CD8-positive, alpha-beta memory T cell (primary cell): ENCODE measurements at regions of chr2 and their contacts with region 1.

Region 1: GRCh38 chr2:170815746-170816503 is 762 bp upstream of the GAD1 start:
- DNase-seq: peak; percentile 32 to 68 (median 50)
- H3K4me3 ChIP-seq: peak overlapping the region; percentile 58
- H3K4me3 Mint-ChIP-seq: peak overlapping the region; percentile 66 to 88 (median 76)
- H3K27ac ChIP-seq: no peak overlapping the region
- H3K27ac Mint-ChIP-seq: peak overlapping the region in 4 of 8 donors; percentile 27 to 91 (median 70)
- H3K4me1 ChIP-seq: peaks cover 53% of the 10 kb centered on the region
- H3K4me1 Mint-ChIP-seq: peaks cover 42 to 71% (median 54%) of the 10 kb centered on the region in 3 donors
- H3K27me3 ChIP-seq: peaks cover 69% of the 10 kb centered on the region
- H3K27me3 Mint-ChIP-seq: peaks cover 77 to 88% of the 10 kb centered on the region in 2 donors

Region 2: DNA sequence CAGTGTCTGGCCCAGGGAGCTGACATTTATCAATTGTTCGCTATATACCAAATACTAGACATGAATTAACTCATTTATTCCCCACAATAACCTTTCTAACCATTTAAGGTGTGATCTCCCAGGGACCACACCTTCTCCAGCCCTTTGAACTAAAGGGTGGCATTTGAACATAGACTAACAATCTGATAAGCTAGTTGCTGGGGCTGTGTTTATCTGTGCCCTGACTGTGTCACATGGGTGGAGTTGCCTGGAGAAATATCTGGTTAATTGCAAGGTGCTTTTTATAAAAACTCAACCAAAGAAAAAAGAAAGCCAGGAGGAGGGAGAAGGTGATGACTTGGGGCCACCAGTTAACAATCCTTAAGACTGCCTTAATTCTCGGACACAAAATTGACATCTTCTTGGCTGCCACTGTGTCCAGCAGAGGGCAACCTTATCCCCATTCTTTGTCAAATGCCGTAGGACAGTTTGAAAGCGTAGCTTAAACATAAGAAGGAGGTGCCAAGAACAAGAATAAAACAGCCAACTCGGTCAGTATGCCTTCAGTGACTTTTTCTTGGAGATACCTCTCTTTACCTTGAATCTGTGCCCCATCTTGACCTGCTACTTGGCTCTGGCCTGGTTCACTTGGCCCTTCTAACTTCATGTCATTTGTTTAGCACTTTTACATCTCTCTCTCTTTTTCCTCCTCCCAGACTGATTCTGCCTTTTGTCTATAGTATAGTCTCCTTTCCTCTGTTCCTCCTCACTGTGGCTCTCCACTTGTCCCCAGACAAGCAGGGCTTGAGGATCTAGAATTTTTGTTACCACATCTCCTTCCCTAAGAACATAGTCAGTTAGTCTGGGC is 454.6 kb before region 1 on chr2:
- CTCF ChIA-PET with region 1: interaction called, 43 read pairs
- POLR2A ChIA-PET with region 1: interaction called, 4 read pairs
- DNase-seq: peak; percentile 5 to 54 (median 26)
- H3K4me3 ChIP-seq: no peak overlapping the region
- H3K4me3 Mint-ChIP-seq: peak overlapping the region in 1 of 7 donors; percentile 19
- H3K27ac ChIP-seq: no peak overlapping the region
- H3K27ac Mint-ChIP-seq: no peak overlapping the region
- H3K4me1 ChIP-seq: peaks cover 4% of the 10 kb centered on the region
- H3K4me1 Mint-ChIP-seq: peaks cover 3 to 8% (median 7%) of the 10 kb centered on the region in 3 donors
- H3K27me3 ChIP-seq: no peaks in the 10 kb centered on the region
- H3K27me3 Mint-ChIP-seq: peaks cover 9 to 49% of the 10 kb centered on the region in 2 donors

Region 3: GRCh38 chr2:170409164-170409535 is 406.8 kb before region 1 on chr2:
- CTCF ChIA-PET with region 1: interaction called, 61 read pairs
- POLR2A ChIA-PET with region 1: no interaction called
- DNase-seq: peak; percentile 49 to 76 (median 62)
- H3K4me3 ChIP-seq: no peak overlapping the region
- H3K4me3 Mint-ChIP-seq: peak overlapping the region in 6 of 7 donors; percentile 46 to 75 (median 68)
- H3K27ac ChIP-seq: no peak overlapping the region
- H3K27ac Mint-ChIP-seq: no peak overlapping the region
- H3K4me1 ChIP-seq: no peaks in the 10 kb centered on the region
- H3K4me1 Mint-ChIP-seq: peaks cover 13 to 33% (median 24%) of the 10 kb centered on the region in 3 donors
- H3K27me3 ChIP-seq: no peaks in the 10 kb centered on the region
- H3K27me3 Mint-ChIP-seq: peaks cover 3 to 27% of the 10 kb centered on the region in 2 donors

Region 4: DNA sequence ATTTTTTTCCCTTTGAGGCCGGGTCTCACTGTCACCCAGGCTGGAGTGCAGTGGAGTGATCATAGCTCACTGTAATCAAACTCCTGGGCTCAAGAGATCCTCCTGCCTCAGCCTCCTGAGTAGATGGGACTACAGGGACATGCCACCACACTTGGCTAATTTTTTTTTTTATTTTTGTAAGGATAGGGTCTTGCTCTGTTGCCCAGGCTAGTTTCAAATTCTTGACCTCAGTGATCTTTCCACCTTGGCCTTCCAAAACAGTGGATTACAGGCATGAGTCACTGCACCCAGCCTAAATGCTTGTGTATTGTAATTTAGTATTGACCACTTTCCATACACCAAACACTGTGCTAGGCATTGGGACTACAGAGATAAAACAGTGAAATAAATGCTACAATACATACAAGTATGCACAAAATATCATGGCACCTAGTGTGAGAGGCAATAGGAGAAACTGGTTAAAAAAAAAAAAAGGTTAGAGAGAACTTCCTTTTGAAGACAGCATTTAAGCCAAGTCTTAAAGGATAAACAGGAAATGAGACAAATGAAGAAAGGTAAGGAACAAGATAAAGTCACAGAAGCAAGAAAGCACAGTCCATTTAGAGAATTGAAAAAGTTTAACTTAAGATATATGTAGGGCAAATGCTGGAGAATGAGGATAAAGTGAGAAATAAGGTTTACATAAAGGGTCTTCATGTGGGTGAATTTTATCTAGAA is 226.5 kb after region 1 on chr2:
- CTCF ChIA-PET with region 1: no interaction called
- POLR2A ChIA-PET with region 1: no interaction called
- DNase-seq: peak in 1 of 5 donors; percentile 30
- H3K4me3 ChIP-seq: peak overlapping the region; percentile 1
- H3K4me3 Mint-ChIP-seq: peak overlapping the region in 4 of 7 donors; percentile 1 to 15 (median 4)
- H3K27ac ChIP-seq: no peak overlapping the region
- H3K27ac Mint-ChIP-seq: peak overlapping the region in 7 of 8 donors; percentile 29 to 82 (median 75)
- H3K4me1 ChIP-seq: peaks cover 33% of the 10 kb centered on the region
- H3K4me1 Mint-ChIP-seq: peaks cover 20 to 31% (median 28%) of the 10 kb centered on the region in 3 donors
- H3K27me3 ChIP-seq: no peaks in the 10 kb centered on the region
- H3K27me3 Mint-ChIP-seq: no peaks in the 10 kb centered on the region